ENCODE measurements at regions of chr1 and their contacts with region 1.

Region 1: DNA sequence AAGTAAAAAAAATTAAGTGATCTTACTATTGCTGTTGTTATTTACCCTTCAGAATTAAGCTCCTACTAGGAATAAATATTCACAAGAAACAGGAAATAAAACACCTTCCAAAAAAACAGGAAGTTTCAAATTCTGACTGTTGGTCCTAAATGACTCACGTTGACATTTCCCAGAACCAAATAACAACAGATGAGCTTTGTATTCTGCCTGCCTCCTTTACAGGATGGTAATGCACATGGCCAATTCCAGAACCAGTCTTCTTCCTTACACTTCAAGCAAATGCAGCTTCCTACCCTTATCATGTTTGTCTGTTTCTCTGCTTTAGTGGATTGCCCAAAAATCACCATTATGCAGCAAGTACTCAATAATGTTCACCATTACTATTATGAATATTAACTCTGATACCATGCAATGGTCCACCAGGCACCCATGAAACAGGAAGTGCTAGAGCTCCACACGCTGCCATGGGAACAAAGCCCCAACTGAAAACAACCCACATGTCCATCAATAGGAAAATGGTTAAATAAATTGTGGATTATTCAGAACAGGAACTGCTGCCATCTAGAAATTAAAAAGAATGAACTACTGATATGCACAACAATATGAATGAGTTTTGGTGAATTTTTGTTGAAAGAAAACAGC is 8.9 kb downstream of the CASP9 start:
- DNase-seq: peak in 2 of 4 experiments; percentile 38 to 45
- ATAC-seq: peak; percentile 59
- H3K4me3 ChIP-seq: no peak overlapping the region
- H3K27ac ChIP-seq: peak overlapping the region; percentile 67
- H3K4me1 ChIP-seq: peaks cover 16 to 20% of the 10 kb centered on the region in 2 experiments
- H3K27me3 ChIP-seq: no peaks in the 10 kb centered on the region
- CTCF ChIP-seq: no peak
- EP300 ChIP-seq: peak; percentile 75
- POLR2A ChIP-seq: no peak
- RAD21 ChIP-seq: no peak

Region 2: DNA sequence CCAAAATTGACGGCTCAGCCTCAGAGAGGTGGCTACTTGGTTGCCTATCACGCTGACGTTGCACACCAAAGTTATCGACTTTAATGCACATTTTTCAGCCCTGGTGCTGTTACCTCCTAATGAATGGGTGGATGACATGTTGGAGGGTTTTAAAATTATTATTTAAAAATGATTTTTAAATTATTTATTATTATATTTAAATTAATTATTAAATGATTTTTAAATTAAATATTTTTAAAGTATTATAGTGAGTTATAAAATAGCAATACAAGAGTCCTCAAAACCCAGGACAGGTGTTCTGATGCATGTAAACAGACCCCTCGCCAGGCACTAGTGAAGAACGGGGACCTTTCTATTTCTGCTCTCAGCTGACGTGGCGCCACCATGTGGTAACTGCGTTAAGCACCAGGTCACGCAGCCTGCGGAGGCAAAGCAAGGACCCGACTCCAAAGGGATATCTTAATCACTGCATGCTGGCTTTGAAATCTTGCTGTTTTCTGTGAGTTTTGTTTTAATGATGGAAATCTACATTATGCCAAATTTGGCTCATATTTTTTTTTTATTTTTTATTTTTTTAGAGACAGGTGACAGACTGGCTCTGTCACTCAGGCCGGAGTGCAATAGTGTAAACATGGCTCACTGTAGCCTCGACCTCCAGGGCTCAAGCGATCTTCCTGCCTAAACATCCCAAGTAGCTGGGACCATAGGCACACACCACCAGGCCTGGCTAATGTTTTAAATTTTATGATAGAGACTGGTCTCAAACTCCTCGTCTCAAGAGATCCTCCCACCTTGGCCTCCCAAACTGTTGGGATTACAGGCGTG is 13.7 kb before region 1 on chr1:
- CTCF ChIA-PET with region 1: no interaction called
- POLR2A ChIA-PET with region 1: interaction called, 19 read pairs
- in situ Hi-C with region 1: no loop called
- intact Hi-C with region 1: no loop called
- DNase-seq: peak; percentile 80 to 84 (median 82)
- ATAC-seq: peak; percentile 98
- H3K4me3 ChIP-seq: no peak overlapping the region
- H3K27ac ChIP-seq: no peak overlapping the region
- H3K4me1 ChIP-seq: no peaks in the 10 kb centered on the region
- H3K27me3 ChIP-seq: no peaks in the 10 kb centered on the region
- CTCF ChIP-seq: peak; percentile 85 to 89 (median 88)
- EP300 ChIP-seq: no peak
- POLR2A ChIP-seq: no peak
- RAD21 ChIP-seq: peak; percentile 77 to 84

Region 3: DNA sequence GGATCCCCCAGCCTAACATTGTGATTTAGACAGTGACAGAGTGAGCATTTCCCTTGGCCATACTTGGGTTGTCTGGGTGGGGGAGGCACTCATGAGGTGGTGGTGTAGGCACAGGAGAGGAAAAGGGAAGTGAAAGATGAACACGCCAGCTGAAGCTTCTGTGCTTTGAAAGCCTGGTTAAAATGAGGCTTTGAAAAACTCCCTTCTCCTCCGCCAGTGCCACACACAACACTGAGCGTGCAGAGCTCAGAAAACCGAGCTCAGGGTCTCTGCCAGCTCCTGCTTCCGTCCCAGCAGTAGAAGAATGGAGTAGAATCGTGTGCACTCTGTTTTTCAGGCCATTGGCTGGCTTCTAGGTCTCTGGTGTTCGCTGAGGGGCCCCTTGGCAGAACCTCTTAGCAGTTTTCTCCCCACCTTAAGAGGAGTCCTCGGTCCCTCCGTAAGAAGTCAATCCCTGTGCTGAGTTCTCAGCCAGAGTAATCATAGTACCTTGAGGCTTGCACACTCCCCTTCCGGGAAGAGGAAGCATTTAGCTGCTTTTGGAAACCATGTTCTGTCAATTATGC is 181.9 kb after region 1 on chr1:
- CTCF ChIA-PET with region 1: no interaction called
- POLR2A ChIA-PET with region 1: no interaction called
- in situ Hi-C with region 1: no loop called
- intact Hi-C with region 1: no loop called
- DNase-seq: no peak
- ATAC-seq: no peak
- H3K4me3 ChIP-seq: no peak overlapping the region
- H3K27ac ChIP-seq: peak overlapping the region; percentile 34; the same call in 1 of the 3 replicates
- H3K4me1 ChIP-seq: peaks cover 5 to 12% of the 10 kb centered on the region in 2 experiments; a peak in 4 of 5 replicates
- H3K27me3 ChIP-seq: no peaks in the 10 kb centered on the region
- CTCF ChIP-seq: no peak
- EP300 ChIP-seq: no peak
- POLR2A ChIP-seq: no peak
- RAD21 ChIP-seq: no peak